Naive thymus-derived CD4-positive, alpha-beta T cell (primary cell): ENCODE measurements at regions of chr11 and their contacts with region 1.

Region 1: DNA sequence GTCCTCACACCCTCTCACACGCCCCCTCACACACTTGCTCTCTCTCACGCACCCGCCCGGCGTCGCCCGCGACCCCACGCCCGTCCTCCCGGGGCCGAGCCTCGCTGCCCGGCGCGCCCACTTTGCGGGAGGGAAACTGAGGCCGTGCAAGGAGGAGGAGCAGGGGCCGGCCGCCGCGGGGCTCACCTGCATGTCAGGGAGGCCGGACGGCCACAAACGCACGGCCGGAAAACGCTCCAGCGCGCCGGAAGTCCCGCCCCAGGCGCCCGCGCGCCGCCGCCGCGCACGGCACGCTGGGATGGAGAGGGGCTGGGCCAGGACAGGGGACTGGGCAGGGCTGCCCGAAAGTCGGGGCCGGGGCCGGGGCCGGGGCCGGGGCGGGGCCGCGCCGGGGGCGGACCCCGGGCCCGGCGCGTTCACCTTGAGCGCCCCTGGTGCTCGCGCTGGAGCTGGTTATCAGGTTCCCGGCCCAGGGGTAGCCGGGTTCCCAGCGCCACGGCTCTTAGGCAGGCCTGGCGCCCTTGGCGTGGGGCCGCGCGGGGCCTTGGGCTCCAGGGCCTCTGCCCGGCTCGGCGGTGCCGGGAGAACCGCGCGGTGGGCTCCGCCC is at the start of gene CHID1:
- DNase-seq: peak; percentile 60 to 94 (median 73)
- ATAC-seq: peak; percentile 98
- H3K4me3 ChIP-seq: peak within 1 kb of the TSS; percentile 68
- H3K4me3 Mint-ChIP-seq: peak within 1 kb of the TSS; percentile 82 to 99 (median 90)
- H3K27ac ChIP-seq: peak within 1 kb of the TSS; percentile 79
- H3K27ac Mint-ChIP-seq: peak within 1 kb of the TSS; percentile 73 to 97 (median 86)
- H3K4me1 ChIP-seq: peaks cover 4 to 10% of the 10 kb centered on the region in 2 donors
- H3K4me1 Mint-ChIP-seq: peaks cover 15 to 24% (median 20%) of the 10 kb centered on the region in 7 donors
- H3K27me3 ChIP-seq: no peaks in the 10 kb centered on the region
- H3K27me3 Mint-ChIP-seq: no peaks in the 10 kb centered on the region
- total RNA-seq, gene CHID1: 30.8 to 56.3 (median 53.0) TPM

Region 2: GRCh38 chr11:818396-819128 is 92.1 kb before region 1 on chr11 and contains the start of gene PNPLA2:
- CTCF ChIA-PET with region 1: no interaction called
- POLR2A ChIA-PET with region 1: no interaction called
- intact Hi-C with region 1: no loop called
- DNase-seq: no peak
- ATAC-seq: no peak
- H3K4me3 ChIP-seq: peak within 1 kb of the TSS; percentile 86
- H3K4me3 Mint-ChIP-seq: peak within 1 kb of the TSS; percentile 82 to 92 (median 86)
- H3K27ac ChIP-seq: peak within 1 kb of the TSS; percentile 91
- H3K27ac Mint-ChIP-seq: peak within 1 kb of the TSS in 8 of 9 donors; percentile 67 to 93 (median 86)
- H3K4me1 ChIP-seq: peaks cover 12 to 15% of the 10 kb centered on the region in 2 donors
- H3K4me1 Mint-ChIP-seq: peaks cover 0 to 24% (median 13%) of the 10 kb centered on the region in 7 donors
- H3K27me3 ChIP-seq: no peaks in the 10 kb centered on the region
- H3K27me3 Mint-ChIP-seq: no peaks in the 10 kb centered on the region
- total RNA-seq, gene PNPLA2: 60.1 to 237 (median 205) TPM

Region 3: DNA sequence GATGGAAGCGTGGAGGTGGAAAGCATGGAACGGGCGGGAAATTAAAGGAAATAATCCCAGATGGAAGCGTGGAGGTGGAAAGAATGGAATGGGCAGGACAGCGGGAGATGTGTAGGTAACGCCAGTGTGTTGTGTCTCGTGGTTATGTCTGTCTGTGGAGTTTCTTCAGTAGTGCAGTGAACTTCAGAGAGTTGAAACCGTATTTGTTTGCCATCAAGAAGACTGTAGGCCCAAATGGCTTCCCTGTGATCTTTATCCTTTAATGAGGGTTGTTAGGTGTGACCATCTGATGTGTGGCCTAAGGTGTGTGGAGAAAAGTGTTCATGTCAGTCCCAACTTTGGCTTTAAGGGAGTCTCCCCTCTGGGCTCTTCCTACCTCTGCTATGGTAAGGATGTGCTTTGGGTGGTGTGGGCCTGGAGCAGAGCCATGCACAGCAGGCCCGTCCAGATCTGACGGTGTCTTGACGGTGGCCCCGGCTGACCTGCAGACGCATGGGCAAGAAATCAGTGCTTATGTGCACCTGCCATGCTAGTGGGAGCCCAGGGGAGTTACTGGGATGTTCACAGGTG is 54.6 kb after region 1 on chr11:
- CTCF ChIA-PET with region 1: no interaction called
- POLR2A ChIA-PET with region 1: no interaction called
- intact Hi-C with region 1: no loop called
- DNase-seq: peak in 1 of 9 donors; percentile 13
- ATAC-seq: peak; percentile 23
- H3K4me3 ChIP-seq: no peak overlapping the region
- H3K4me3 Mint-ChIP-seq: no peak overlapping the region
- H3K27ac ChIP-seq: no peak overlapping the region
- H3K27ac Mint-ChIP-seq: no peak overlapping the region
- H3K4me1 ChIP-seq: peaks cover 7% of the 10 kb centered on the region in 2 donors
- H3K4me1 Mint-ChIP-seq: peaks cover 13 to 36% (median 27%) of the 10 kb centered on the region in 7 donors
- H3K27me3 ChIP-seq: no peaks in the 10 kb centered on the region
- H3K27me3 Mint-ChIP-seq: no peaks in the 10 kb centered on the region

Region 4: DNA sequence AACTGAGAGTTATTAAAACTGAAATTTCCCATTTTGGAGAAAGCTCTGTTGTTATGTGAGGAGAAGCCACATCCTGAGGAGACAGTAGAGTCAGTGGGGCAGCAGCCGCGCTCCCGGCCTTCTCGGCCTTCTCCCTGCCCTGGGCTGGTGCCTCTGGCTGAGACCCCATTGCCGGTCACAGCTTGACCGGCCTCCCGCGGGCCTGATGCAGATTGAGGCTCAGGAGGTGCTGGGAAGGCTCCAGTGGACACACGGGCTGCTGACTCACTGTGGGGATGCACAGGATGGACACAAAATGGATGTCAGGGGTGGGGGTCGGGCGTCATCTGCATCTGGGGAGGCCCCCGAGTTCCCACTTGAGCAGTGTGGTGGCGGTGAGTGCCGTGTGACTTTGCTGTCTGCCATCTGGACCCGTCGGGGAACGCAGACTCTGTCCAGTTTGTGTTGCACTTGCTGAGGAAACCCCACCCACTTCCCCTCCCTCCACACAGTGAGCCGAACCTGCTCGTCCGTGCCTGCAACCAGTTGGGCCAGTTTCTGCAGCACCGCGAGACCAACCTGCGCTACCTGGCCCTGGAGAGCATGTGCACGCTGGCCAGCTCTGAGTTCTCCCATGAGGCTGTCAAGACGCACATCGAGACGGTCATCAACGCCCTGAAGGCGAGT is 75.7 kb after region 1 on chr11:
- CTCF ChIA-PET with region 1: no interaction called
- POLR2A ChIA-PET with region 1: no interaction called
- intact Hi-C with region 1: no loop called
- DNase-seq: no peak
- ATAC-seq: no peak
- H3K4me3 ChIP-seq: no peak overlapping the region
- H3K4me3 Mint-ChIP-seq: no peak overlapping the region
- H3K27ac ChIP-seq: no peak overlapping the region
- H3K27ac Mint-ChIP-seq: no peak overlapping the region
- H3K4me1 ChIP-seq: no peaks in the 10 kb centered on the region
- H3K4me1 Mint-ChIP-seq: peaks cover 0 to 3% (median 0%) of the 10 kb centered on the region in 7 donors
- H3K27me3 ChIP-seq: no peaks in the 10 kb centered on the region
- H3K27me3 Mint-ChIP-seq: no peaks in the 10 kb centered on the region

Region 5: GRCh38 chr11:1050581-1051355 is 140.1 kb after region 1 on chr11:
- CTCF ChIA-PET with region 1: no interaction called
- POLR2A ChIA-PET with region 1: no interaction called
- intact Hi-C with region 1: loop called in 1 of 2 experiments (anchors 1 kb)
- DNase-seq: peak; percentile 54 to 78 (median 68)
- ATAC-seq: peak; percentile 95
- H3K4me3 ChIP-seq: no peak overlapping the region
- H3K4me3 Mint-ChIP-seq: no peak overlapping the region
- H3K27ac ChIP-seq: no peak overlapping the region
- H3K27ac Mint-ChIP-seq: no peak overlapping the region
- H3K4me1 ChIP-seq: no peaks in the 10 kb centered on the region
- H3K4me1 Mint-ChIP-seq: peaks cover 0 to 5% (median 0%) of the 10 kb centered on the region in 7 donors
- H3K27me3 ChIP-seq: peaks cover 0 to 5% of the 10 kb centered on the region in 2 donors
- H3K27me3 Mint-ChIP-seq: peaks cover 0 to 11% (median 4%) of the 10 kb centered on the region in 5 donors